Activated CD4-positive, alpha-beta T cell treated with anti-CD3 and anti-CD28 coated beads for 36 hours (primary cell): ENCODE measurements at regions of chr4 and their contacts with region 1.

Region 1: DNA sequence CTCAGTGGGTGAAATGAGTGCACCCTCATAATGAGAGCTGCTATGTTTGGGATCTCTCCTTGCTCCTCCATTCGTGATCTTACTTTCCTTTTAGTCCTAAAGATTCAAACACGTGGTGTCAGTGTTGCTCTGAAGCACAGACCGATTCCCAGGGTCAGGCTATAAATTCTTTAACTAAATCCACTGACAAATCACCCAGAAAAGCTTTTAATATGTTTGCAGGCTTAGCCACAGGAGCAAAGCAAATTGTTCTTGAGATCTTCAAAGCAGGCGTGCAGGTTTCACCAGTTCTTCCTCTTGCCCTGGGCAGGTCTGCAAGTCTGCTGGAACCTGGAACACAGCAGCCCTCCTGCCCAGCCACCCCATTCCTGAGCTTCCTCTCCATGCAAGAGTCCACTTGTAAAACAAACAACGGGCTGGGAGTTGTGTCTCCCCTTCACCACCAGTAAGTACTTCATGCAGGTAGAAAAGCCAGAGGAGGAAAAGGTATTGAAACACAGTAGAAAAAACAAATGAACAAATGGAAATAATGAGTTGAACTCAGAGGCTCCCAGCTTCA is 70.1 kb upstream of the ENPP6 start:
- DNase-seq: no peak
- ATAC-seq: no peak
- H3K4me3 Mint-ChIP-seq: no peak overlapping the region
- H3K27ac Mint-ChIP-seq: peak overlapping the region; percentile 40
- H3K4me1 Mint-ChIP-seq: peaks cover 56% of the 10 kb centered on the region
- H3K27me3 Mint-ChIP-seq: peaks cover 4% of the 10 kb centered on the region

Region 2: GRCh38 chr4:184237612-184238011 is 50.2 kb before region 1 on chr4:
- CTCF ChIA-PET with region 1: interaction called, 3 read pairs
- POLR2A ChIA-PET with region 1: interaction called, 4 read pairs
- intact Hi-C with region 1: loop called in 1 of 2 experiments (anchors 1 kb)
- DNase-seq: peak; percentile 73
- ATAC-seq: peak; percentile 97
- H3K4me3 Mint-ChIP-seq: peak overlapping the region; percentile 9
- H3K27ac Mint-ChIP-seq: peak overlapping the region; percentile 84
- H3K4me1 Mint-ChIP-seq: peaks cover 28% of the 10 kb centered on the region
- H3K27me3 Mint-ChIP-seq: no peaks in the 10 kb centered on the region

Region 3: DNA sequence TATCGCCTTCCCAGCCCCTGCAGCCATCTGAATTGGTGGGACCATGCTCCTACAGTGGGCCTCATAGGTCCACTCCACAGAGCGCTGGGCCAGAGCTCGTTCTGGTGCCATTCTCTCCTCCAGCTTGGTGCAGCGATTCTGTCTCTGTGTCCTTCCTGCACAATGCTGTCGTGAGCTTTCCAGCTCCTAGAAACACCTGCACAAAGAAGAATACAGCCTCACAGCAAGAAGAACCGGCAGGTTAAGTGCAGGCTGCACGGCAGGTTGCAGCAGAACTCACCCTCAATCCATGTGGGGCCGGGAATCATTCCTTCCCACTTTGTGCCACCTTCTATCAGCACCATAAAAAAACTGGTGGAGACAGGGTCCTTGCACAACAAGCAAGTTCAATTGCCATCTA is 31.1 kb after region 1 on chr4:
- CTCF ChIA-PET with region 1: interaction called, 6 read pairs
- POLR2A ChIA-PET with region 1: interaction called, 5 read pairs
- intact Hi-C with region 1: loop called (anchors 1 kb)
- DNase-seq: no peak
- ATAC-seq: peak; percentile 8
- H3K4me3 Mint-ChIP-seq: no peak overlapping the region
- H3K27ac Mint-ChIP-seq: peak overlapping the region; percentile 59
- H3K4me1 Mint-ChIP-seq: peaks cover 35% of the 10 kb centered on the region
- H3K27me3 Mint-ChIP-seq: peaks cover 3% of the 10 kb centered on the region